ENCODE measurements at regions of chr12 and their contacts with region 1.

Region 1: DNA sequence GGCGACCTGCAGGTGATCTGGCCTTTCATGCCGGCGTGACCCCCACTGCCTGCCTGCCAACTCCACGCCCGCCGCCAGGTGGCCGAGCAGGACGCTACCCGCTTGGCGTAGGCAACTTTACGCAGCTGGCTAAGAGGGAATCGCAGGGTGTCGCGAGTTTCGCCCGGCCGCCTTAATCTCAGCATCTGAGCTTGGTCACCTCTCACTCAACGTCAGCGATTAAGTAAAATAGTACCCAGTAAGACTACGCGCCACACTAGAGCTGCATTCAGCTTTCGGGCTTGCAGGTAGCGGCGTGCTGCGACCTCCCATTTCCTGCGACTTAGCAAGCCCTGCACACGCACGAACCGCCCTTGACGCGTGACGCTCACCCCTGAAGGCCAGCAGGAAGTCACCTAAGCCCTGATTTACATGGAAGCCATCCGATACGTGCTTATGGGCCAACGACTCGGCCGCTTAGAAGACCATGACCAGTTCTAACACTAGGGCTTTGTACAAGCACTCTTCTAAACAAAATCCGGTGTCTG is 33.2 kb downstream of the WBP11 start:
- DNase-seq: peak; percentile 91
- ATAC-seq: peak; percentile 56
- H3K4me3 Mint-ChIP-seq: peak overlapping the region; percentile 98
- H3K27ac Mint-ChIP-seq: peak overlapping the region; percentile 99
- H3K4me1 Mint-ChIP-seq: peaks cover 61% of the 10 kb centered on the region
- H3K27me3 Mint-ChIP-seq: no peaks in the 10 kb centered on the region
- CTCF ChIP-seq: no peak

Region 2: GRCh38 chr12:13534645-13535398 is 1235.2 kb before region 1 on chr12:
- CTCF ChIA-PET with region 1: no interaction called
- POLR2A ChIA-PET with region 1: no interaction called
- intact Hi-C with region 1: loop called (anchors 5 kb)
- DNase-seq: peak; percentile 24
- ATAC-seq: no peak
- H3K4me3 Mint-ChIP-seq: no peak overlapping the region
- H3K27ac Mint-ChIP-seq: no peak overlapping the region
- H3K4me1 Mint-ChIP-seq: peaks cover 48% of the 10 kb centered on the region
- H3K27me3 Mint-ChIP-seq: no peaks in the 10 kb centered on the region
- CTCF ChIP-seq: no peak

Region 3: GRCh38 chr12:14613718-14614117 is 156.3 kb before region 1 on chr12:
- CTCF ChIA-PET with region 1: no interaction called
- POLR2A ChIA-PET with region 1: interaction called, 16 read pairs
- intact Hi-C with region 1: loop called (anchors 1 kb)
- DNase-seq: peak; percentile 34
- ATAC-seq: peak; percentile 86
- H3K4me3 Mint-ChIP-seq: peak overlapping the region; percentile 60
- H3K27ac Mint-ChIP-seq: peak overlapping the region; percentile 93
- H3K4me1 Mint-ChIP-seq: peaks cover 38% of the 10 kb centered on the region
- H3K27me3 Mint-ChIP-seq: no peaks in the 10 kb centered on the region
- CTCF ChIP-seq: no peak

Region 4: GRCh38 chr12:14803011-14803829 is 33.2 kb after region 1 on chr12 and contains the starts of genes C12orf60 and WBP11:
- CTCF ChIA-PET with region 1: interaction called, 4 read pairs
- POLR2A ChIA-PET with region 1: interaction called, 141 read pairs
- intact Hi-C with region 1: loop called (anchors 1 kb)
- DNase-seq: peak; percentile 74
- ATAC-seq: peak; percentile 95
- H3K4me3 Mint-ChIP-seq: no peak within 1 kb of the TSS
- H3K27ac Mint-ChIP-seq: no peak within 1 kb of the TSS
- H3K4me1 Mint-ChIP-seq: peaks cover 17% of the 10 kb centered on the region
- H3K27me3 Mint-ChIP-seq: no peaks in the 10 kb centered on the region
- CTCF ChIP-seq: no peak
- total RNA-seq, gene C12orf60: 0.64 and 0.69 TPM in 2 replicates
- total RNA-seq, gene WBP11: 86.3 and 89.4 TPM in 2 replicates

Region 5: DNA sequence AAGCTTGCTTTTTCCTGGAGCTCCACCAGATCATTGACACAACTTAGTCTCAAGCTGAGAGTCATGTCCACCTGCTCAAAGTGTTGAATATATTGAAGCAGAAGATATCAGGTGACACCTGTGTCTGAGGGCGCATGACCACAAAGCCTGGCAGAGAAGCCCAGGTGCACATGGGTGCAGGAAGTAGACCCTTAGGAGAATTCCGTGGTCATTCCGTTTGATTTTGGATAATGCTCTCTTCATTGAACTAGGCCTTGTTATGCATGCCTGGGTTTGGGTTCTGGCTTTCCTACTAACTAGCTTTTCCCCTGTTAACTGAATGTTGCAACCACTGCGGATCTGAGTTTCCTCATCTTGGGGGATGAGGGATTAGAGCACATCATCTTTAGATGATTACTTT is 184.2 kb after region 1 on chr12:
- CTCF ChIA-PET with region 1: no interaction called
- POLR2A ChIA-PET with region 1: interaction called, 98 read pairs
- intact Hi-C with region 1: no loop called
- DNase-seq: no peak
- ATAC-seq: no peak
- H3K4me3 Mint-ChIP-seq: peak overlapping the region; percentile 19
- H3K27ac Mint-ChIP-seq: peak overlapping the region; percentile 96
- H3K4me1 Mint-ChIP-seq: peaks cover 98% of the 10 kb centered on the region
- H3K27me3 Mint-ChIP-seq: no peaks in the 10 kb centered on the region
- CTCF ChIP-seq: no peak

Region 6: DNA sequence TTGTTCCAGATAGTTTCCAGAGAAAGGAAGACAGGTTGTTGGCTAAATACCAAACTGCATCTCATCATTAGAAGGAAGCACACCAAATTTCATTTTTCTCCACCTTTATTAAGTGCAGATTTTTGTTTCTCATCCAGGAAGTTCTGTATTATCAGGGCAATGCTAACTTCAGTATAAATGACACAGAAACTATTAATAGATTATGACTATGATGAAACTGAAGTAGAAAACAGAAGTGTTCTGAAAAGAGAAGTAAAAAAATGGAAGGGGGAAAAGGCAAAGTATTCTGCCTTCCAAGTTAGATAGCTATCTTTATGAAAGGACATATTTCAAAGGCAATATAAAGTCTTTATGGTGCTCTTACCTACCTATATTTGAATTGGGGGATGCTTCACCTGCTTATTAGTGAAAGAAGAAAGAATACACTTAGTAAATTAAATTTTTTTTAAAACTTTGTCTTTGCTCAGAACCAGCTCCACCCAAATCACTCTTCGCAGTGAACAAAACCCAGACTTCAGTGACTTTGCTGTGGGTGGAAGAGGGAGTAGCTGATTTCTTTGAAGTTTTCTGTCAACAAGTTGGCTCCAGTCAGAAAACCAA is 776.2 kb after region 1 on chr12:
- CTCF ChIA-PET with region 1: no interaction called
- POLR2A ChIA-PET with region 1: interaction called, 13 read pairs
- intact Hi-C with region 1: no loop called
- DNase-seq: no peak
- ATAC-seq: peak; percentile 76
- H3K4me3 Mint-ChIP-seq: peak overlapping the region; percentile 87
- H3K27ac Mint-ChIP-seq: peak overlapping the region; percentile 99
- H3K4me1 Mint-ChIP-seq: peaks cover 60% of the 10 kb centered on the region
- H3K27me3 Mint-ChIP-seq: no peaks in the 10 kb centered on the region
- CTCF ChIP-seq: no peak

Measured in activated B cell treated with CpG ODN at 0.5 μM for 24 hours (primary cell).